ENCODE measurements at regions of chr5 and their contacts with region 1.

Region 1: GRCh38 chr5:181159286-181159829 is 12.0 kb downstream of the OR2V2 start:
- DNase-seq: peak; percentile 97
- H3K4me3 Mint-ChIP-seq: peak overlapping the region; percentile 11
- H3K27ac Mint-ChIP-seq: peak overlapping the region; percentile 85
- H3K4me1 Mint-ChIP-seq: peaks cover 33% of the 10 kb centered on the region
- H3K27me3 Mint-ChIP-seq: peaks cover 13% of the 10 kb centered on the region

Region 2: DNA sequence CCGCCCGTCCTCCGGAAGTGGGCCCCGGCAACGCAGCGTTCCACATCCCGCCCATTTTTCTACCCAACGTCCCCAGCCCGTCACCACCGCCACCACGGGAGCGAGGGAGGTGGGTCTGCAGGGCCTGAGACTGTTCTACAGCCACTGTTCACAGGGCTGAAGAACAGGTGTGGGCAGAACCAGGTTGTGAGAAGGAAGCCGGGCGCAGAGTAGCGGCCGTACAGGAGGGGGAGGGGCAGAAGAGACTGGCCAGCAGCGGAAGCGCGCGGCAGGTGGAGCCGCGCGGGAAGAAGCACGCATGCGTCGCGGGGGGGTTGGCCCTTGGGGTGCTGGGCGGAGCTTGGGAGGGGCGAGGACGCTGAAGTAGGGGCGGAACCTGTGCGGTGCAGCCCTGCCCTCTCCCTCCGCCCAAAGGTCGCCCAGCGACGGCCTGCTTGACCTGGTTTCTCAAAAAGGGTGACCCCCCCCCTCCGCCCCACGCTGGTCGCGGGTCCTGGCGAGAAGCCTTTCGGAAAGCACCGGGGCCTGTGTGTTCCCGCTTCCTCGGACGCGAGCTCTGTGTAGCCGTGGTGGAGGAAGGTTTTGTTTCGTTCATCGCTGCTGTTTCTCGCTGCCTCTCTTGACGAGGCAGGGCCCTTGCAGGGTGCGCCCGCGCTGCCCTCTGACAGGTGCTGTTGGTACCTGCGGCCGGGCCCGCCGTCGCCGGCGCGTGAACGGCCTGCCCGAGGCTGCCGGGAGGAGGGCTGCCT is 349.0 kb before region 1 on chr5:
- CTCF ChIA-PET with region 1: no interaction called
- intact Hi-C with region 1: loop called (anchors 2 kb)
- DNase-seq: peak; percentile 96
- H3K4me3 Mint-ChIP-seq: peak overlapping the region; percentile 98
- H3K27ac Mint-ChIP-seq: peak overlapping the region; percentile 99
- H3K4me1 Mint-ChIP-seq: peaks cover 69% of the 10 kb centered on the region
- H3K27me3 Mint-ChIP-seq: no peaks in the 10 kb centered on the region

Region 3: GRCh38 chr5:180868960-180869359 is 290.4 kb before region 1 on chr5:
- CTCF ChIA-PET with region 1: no interaction called
- intact Hi-C with region 1: loop called (anchors 2 kb)
- DNase-seq: peak; percentile 91
- H3K4me3 Mint-ChIP-seq: no peak overlapping the region
- H3K27ac Mint-ChIP-seq: no peak overlapping the region
- H3K4me1 Mint-ChIP-seq: peaks cover 4% of the 10 kb centered on the region
- H3K27me3 Mint-ChIP-seq: no peaks in the 10 kb centered on the region

Region 4: DNA sequence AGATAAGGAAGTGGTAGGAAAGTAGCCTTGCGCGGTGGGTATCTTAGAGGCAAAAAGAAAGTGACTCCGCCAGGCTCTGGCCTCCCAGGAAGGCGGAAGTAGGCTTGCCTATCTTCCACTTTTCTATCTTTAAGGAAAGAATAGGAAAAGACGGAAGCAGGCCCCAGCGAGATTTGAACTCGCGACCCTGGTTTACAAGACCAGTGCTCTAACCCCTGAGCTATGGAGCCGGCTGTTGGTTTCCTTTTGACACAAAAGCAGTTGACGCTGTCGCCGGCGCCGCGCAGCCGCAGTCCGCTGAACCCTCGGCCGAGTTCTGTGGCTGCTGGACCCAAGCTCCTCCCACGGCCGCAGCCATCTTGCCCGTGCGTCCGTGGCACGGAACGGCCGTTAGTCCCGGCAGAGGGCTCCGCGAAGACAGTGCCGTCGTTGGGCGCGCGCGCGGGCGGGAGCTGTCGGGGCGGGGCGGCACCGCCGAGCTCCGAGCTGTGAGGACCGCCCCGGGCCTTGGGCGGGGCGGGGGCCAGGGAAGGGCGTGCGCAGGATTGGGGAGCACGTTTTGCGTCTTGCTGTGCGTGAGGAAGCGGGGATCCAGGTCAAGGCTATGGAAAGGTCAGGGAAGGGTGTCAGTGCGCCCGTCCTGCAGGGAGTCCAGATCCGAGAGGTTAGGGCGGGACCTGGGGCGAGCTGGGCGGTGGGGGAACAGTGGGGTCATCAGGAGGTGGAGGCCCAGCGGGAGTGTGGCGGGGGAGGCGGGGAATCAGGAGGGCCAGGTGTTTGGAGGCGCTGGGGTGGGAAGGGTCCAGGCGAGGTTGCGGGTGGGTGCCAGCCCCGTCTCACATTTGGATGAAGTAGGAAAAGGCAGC is 32.4 kb after region 1 on chr5:
- CTCF ChIA-PET with region 1: no interaction called
- intact Hi-C with region 1: loop called (anchors 1 kb)
- DNase-seq: peak; percentile 95
- H3K4me3 Mint-ChIP-seq: peak overlapping the region; percentile 85
- H3K27ac Mint-ChIP-seq: peak overlapping the region; percentile 92
- H3K4me1 Mint-ChIP-seq: peaks cover 25% of the 10 kb centered on the region
- H3K27me3 Mint-ChIP-seq: peaks cover 9% of the 10 kb centered on the region

Region 5: GRCh38 chr5:181243512-181244343 is 84.4 kb after region 1 on chr5 and contains the start of gene RACK1:
- CTCF ChIA-PET with region 1: no interaction called
- intact Hi-C with region 1: loop called (anchors 1 kb)
- DNase-seq: peak; percentile 94
- H3K4me3 Mint-ChIP-seq: peak within 1 kb of the TSS; percentile 95
- H3K27ac Mint-ChIP-seq: peak within 1 kb of the TSS; percentile 99
- H3K4me1 Mint-ChIP-seq: peaks cover 60% of the 10 kb centered on the region
- H3K27me3 Mint-ChIP-seq: no peaks in the 10 kb centered on the region
- total RNA-seq, gene RACK1: 3,176 to 3,362 TPM